ENCODE measurements at regions of chr10 and their contacts with region 1.

Region 1: DNA sequence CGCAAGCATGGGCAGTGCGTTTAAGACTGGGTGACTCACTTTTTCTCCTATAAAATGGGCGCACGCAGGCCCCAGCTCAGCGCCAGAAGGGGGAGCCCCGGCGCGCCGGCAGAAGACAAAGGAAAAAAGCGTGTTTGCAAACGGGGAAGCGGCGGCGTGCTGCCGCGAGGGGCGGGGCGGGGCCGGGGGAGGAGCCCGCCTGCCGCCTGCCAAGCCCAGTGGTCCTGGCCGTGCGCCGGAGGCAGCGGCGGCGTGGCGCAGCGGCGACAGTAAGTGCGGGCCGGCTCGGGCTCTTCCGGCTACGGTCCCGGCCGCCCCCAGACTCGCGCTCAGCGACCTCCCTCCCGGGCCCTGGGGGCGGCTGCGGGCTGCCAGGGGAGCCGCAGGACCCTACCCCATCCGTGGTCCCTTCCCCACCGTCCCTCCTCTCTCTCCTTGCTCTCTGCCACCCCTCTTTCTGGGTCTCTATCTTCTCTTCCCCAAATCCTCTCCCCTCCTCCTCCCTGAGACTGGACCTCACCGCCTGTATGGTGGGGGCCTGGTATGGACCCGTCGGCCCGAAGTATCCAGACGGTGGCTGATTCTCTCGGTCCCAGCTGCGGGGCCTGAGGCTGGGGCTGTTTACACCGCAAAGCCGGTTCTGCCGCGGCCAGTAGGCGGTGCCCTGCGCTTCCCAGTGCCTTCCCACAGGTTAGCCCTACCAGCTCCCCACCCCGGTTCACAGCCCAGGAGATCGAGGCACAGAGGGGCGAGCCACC is at the start of gene SLC29A3:
- DNase-seq: peak; percentile 79
- ATAC-seq: peak; percentile 93
- H3K4me3 ChIP-seq: peak within 1 kb of the TSS; percentile 93
- H3K27ac ChIP-seq: no peak within 1 kb of the TSS
- H3K4me1 ChIP-seq: peaks cover 7% of the 10 kb centered on the region; the same call in 1 of the 2 replicates
- H3K27me3 ChIP-seq: no peaks in the 10 kb centered on the region
- CTCF ChIP-seq: peak; percentile 64
- total RNA-seq, gene SLC29A3: 3.9 and 4.4 TPM in 2 replicates

Region 2: GRCh38 chr10:70803775-70804420 is 515.3 kb before region 1 on chr10:
- CTCF ChIA-PET with region 1: no interaction called
- POLR2A ChIA-PET with region 1: no interaction called
- intact Hi-C with region 1: no loop called
- DNase-seq: peak; percentile 87
- ATAC-seq: peak; percentile 39
- H3K4me3 ChIP-seq: 0 out of 2 replicates have a peak overlapping the region, but pooled peaks have one; percentile 4
- H3K27ac ChIP-seq: peak overlapping the region; percentile 77
- H3K4me1 ChIP-seq: peaks cover 53% of the 10 kb centered on the region
- H3K27me3 ChIP-seq: no peaks in the 10 kb centered on the region
- CTCF ChIP-seq: no peak

Region 3: GRCh38 chr10:71339799-71340589 is 20.8 kb after region 1 on chr10:
- CTCF ChIA-PET with region 1: interaction called, 4 read pairs
- POLR2A ChIA-PET with region 1: no interaction called
- intact Hi-C with region 1: loop called (anchors 1 kb)
- DNase-seq: peak; percentile 92
- ATAC-seq: peak; percentile 75
- H3K4me3 ChIP-seq: no peak overlapping the region
- H3K27ac ChIP-seq: peak overlapping the region; percentile 65
- H3K4me1 ChIP-seq: peaks cover 39% of the 10 kb centered on the region
- H3K27me3 ChIP-seq: no peaks in the 10 kb centered on the region
- CTCF ChIP-seq: no peak

Region 4: GRCh38 chr10:71372882-71373495 is 53.8 kb after region 1 on chr10:
- CTCF ChIA-PET with region 1: interaction called, 5 read pairs
- POLR2A ChIA-PET with region 1: interaction called, 3 read pairs
- intact Hi-C with region 1: loop called (anchors 1 kb)
- DNase-seq: no peak
- ATAC-seq: no peak
- H3K4me3 ChIP-seq: no peak overlapping the region
- H3K27ac ChIP-seq: no peak overlapping the region
- H3K4me1 ChIP-seq: peaks cover 9% of the 10 kb centered on the region
- H3K27me3 ChIP-seq: no peaks in the 10 kb centered on the region
- CTCF ChIP-seq: no peak

Region 5: DNA sequence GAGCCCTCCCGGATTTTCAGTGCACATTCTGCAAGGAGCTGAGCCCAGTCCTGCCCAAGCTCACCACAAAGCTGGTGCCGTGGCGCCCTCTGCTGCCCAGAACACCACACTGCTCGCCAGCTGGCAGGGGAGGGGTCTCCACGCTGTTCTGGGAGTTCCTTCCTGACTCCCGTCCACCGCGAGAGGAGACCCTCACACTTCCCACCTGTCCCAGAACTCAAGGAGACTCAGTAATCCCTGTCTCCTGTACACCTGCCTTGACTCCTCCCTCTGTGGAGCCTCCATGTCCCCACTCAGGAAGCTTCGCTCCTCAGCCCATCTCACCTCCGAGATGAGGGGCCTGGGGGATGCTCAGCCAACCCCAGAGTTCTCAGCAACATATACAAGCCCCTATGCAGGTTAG is 389.1 kb after region 1 on chr10:
- CTCF ChIA-PET with region 1: interaction called, 4 read pairs
- POLR2A ChIA-PET with region 1: no interaction called
- intact Hi-C with region 1: loop called (anchors 10 kb)
- DNase-seq: peak; percentile 44
- ATAC-seq: peak; percentile 75
- H3K4me3 ChIP-seq: no peak overlapping the region
- H3K27ac ChIP-seq: no peak overlapping the region
- H3K4me1 ChIP-seq: no peaks in the 10 kb centered on the region
- H3K27me3 ChIP-seq: no peaks in the 10 kb centered on the region
- CTCF ChIP-seq: peak; percentile 78

Region 6: GRCh38 chr10:71893920-71894319 is 574.7 kb after region 1 on chr10:
- CTCF ChIA-PET with region 1: no interaction called
- POLR2A ChIA-PET with region 1: no interaction called
- intact Hi-C with region 1: loop called (anchors 10 kb)
- DNase-seq: no peak
- ATAC-seq: no peak
- H3K4me3 ChIP-seq: no peak overlapping the region
- H3K27ac ChIP-seq: no peak overlapping the region
- H3K4me1 ChIP-seq: peaks cover 5% of the 10 kb centered on the region
- H3K27me3 ChIP-seq: no peaks in the 10 kb centered on the region
- CTCF ChIP-seq: no peak

Measured in PC-3 (cell line).